CD4-positive, alpha-beta memory T cell (primary cell): ENCODE measurements at regions of chr14 and their contacts with region 1.

Region 1: GRCh38 chr14:55051426-55052268 is at the start of gene MAPK1IP1L:
- DNase-seq: peak; percentile 88 to 95 (median 91)
- H3K4me3 ChIP-seq: peak within 1 kb of the TSS; percentile 67 to 98
- H3K4me3 Mint-ChIP-seq: peak within 1 kb of the TSS; percentile 87 to 95 (median 92)
- H3K27ac ChIP-seq: peak within 1 kb of the TSS; percentile 100
- H3K27ac Mint-ChIP-seq: peak within 1 kb of the TSS; percentile 95 to 98 (median 96)
- H3K4me1 ChIP-seq: peaks cover 48% of the 10 kb centered on the region
- H3K4me1 Mint-ChIP-seq: peaks cover 27 to 55% (median 39%) of the 10 kb centered on the region in 4 donors
- H3K27me3 ChIP-seq: no peaks in the 10 kb centered on the region
- H3K27me3 Mint-ChIP-seq: no peaks in the 10 kb centered on the region
- total RNA-seq, gene MAPK1IP1L: 67.2 to 73.4 TPM

Region 2: GRCh38 chr14:54942913-54943312 is 108.7 kb before region 1 on chr14:
- CTCF ChIA-PET with region 1: no interaction called
- POLR2A ChIA-PET with region 1: no interaction called
- intact Hi-C with region 1: no loop called
- DNase-seq: no peak
- H3K4me3 ChIP-seq: no peak overlapping the region
- H3K4me3 Mint-ChIP-seq: no peak overlapping the region
- H3K27ac ChIP-seq: no peak overlapping the region
- H3K27ac Mint-ChIP-seq: no peak overlapping the region
- H3K4me1 ChIP-seq: peaks cover 20% of the 10 kb centered on the region
- H3K4me1 Mint-ChIP-seq: peaks cover 5 to 17% (median 6%) of the 10 kb centered on the region in 4 donors
- H3K27me3 ChIP-seq: no peaks in the 10 kb centered on the region
- H3K27me3 Mint-ChIP-seq: no peaks in the 10 kb centered on the region

Region 3: GRCh38 chr14:54955143-54955542 is 96.5 kb before region 1 on chr14:
- CTCF ChIA-PET with region 1: no interaction called
- POLR2A ChIA-PET with region 1: no interaction called
- intact Hi-C with region 1: no loop called
- DNase-seq: no peak
- H3K4me3 ChIP-seq: no peak overlapping the region
- H3K4me3 Mint-ChIP-seq: no peak overlapping the region
- H3K27ac ChIP-seq: no peak overlapping the region
- H3K27ac Mint-ChIP-seq: no peak overlapping the region
- H3K4me1 ChIP-seq: no peaks in the 10 kb centered on the region
- H3K4me1 Mint-ChIP-seq: peaks cover 0 to 1% (median 0%) of the 10 kb centered on the region in 4 donors
- H3K27me3 ChIP-seq: no peaks in the 10 kb centered on the region
- H3K27me3 Mint-ChIP-seq: no peaks in the 10 kb centered on the region

Region 4: DNA sequence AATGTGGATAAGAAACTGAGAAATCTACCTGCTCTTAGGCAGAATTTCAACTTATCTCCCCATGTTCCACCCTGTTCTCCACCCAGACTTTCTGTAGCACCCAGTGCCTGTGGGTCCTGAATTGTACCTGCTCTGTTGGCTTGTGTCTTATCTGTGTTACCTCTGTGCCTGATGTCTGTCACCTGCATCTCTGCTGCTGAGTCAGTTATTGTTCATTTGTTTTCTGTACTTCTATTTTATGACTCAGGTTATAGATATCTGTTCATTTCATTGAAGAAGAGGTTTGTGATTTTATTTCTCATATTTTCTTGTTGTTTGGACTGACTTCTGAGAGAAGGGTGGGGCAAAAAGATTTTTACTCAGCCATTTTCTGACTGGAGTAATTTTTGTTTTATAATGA is 12.9 kb before region 1 on chr14:
- CTCF ChIA-PET with region 1: interaction called, 26 read pairs
- POLR2A ChIA-PET with region 1: interaction called, 13 read pairs
- intact Hi-C with region 1: no loop called
- DNase-seq: no peak
- H3K4me3 ChIP-seq: no peak overlapping the region
- H3K4me3 Mint-ChIP-seq: no peak overlapping the region
- H3K27ac ChIP-seq: no peak overlapping the region
- H3K27ac Mint-ChIP-seq: peak overlapping the region in 2 of 7 donors; percentile 28 to 62
- H3K4me1 ChIP-seq: no peaks in the 10 kb centered on the region
- H3K4me1 Mint-ChIP-seq: peaks cover 0 to 4% (median under 1%) of the 10 kb centered on the region in 4 donors
- H3K27me3 ChIP-seq: no peaks in the 10 kb centered on the region
- H3K27me3 Mint-ChIP-seq: no peaks in the 10 kb centered on the region

Region 5: DNA sequence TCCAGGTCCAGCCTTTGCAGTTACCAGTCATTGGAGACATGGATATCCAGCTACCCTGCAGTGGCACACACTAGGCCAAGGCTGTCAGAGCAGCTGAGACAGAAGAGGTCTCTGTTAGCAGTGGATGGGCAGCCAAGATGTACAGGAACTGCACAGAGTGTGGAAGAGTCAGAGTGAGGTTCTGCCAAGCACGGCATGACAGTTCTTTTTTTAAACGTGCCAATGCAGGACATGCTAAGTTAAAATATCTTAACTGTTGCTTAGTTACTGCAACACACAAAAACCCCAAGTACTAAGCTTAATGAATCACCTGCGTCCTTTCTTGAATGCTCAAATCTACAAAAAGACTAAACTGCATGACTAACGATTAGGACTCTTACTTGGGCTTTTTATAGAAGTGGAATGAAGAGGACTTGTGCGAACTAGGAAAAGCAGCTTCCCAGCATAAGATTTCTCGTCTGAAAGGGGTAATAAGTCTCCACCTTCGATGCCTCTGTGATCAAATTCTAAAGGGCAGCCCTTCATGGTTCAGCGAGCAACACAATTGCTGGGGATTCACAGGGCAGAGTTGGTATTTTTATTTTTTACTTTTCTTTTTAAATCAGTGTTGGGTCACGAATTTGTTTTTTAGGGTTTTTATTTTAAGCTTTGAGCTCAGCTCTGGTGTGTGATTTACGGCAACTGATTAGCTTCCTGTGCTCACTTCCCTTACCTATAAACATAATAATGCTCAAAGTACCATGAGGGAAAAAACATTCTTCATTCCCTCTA is 20.4 kb after region 1 on chr14:
- CTCF ChIA-PET with region 1: interaction called, 14 read pairs
- POLR2A ChIA-PET with region 1: interaction called, 18 read pairs
- intact Hi-C with region 1: loop called (anchors 2 kb)
- DNase-seq: peak; percentile 24 to 52 (median 36)
- H3K4me3 ChIP-seq: peak overlapping the region in 1 of 2 donors; percentile 6
- H3K4me3 Mint-ChIP-seq: peak overlapping the region; percentile 24 to 85 (median 57)
- H3K27ac ChIP-seq: peak overlapping the region; percentile 29
- H3K27ac Mint-ChIP-seq: peak overlapping the region; percentile 72 to 93 (median 90)
- H3K4me1 ChIP-seq: peaks cover 37% of the 10 kb centered on the region
- H3K4me1 Mint-ChIP-seq: peaks cover 24 to 44% (median 38%) of the 10 kb centered on the region in 4 donors
- H3K27me3 ChIP-seq: no peaks in the 10 kb centered on the region
- H3K27me3 Mint-ChIP-seq: no peaks in the 10 kb centered on the region

Region 6: GRCh38 chr14:55094321-55095157 is 42.9 kb after region 1 on chr14:
- CTCF ChIA-PET with region 1: interaction called, 17 read pairs
- POLR2A ChIA-PET with region 1: interaction called, 6 read pairs
- intact Hi-C with region 1: loop called (anchors 1 kb)
- DNase-seq: no peak
- H3K4me3 ChIP-seq: no peak overlapping the region
- H3K4me3 Mint-ChIP-seq: no peak overlapping the region
- H3K27ac ChIP-seq: no peak overlapping the region
- H3K27ac Mint-ChIP-seq: no peak overlapping the region
- H3K4me1 ChIP-seq: peaks cover 21% of the 10 kb centered on the region
- H3K4me1 Mint-ChIP-seq: peaks cover 19 to 23% (median 20%) of the 10 kb centered on the region in 4 donors
- H3K27me3 ChIP-seq: no peaks in the 10 kb centered on the region
- H3K27me3 Mint-ChIP-seq: no peaks in the 10 kb centered on the region

Region 7: GRCh38 chr14:55160989-55161388 is 109.3 kb after region 1 on chr14:
- CTCF ChIA-PET with region 1: interaction called, 30 read pairs
- POLR2A ChIA-PET with region 1: interaction called, 11 read pairs
- intact Hi-C with region 1: loop called (anchors 1 kb)
- DNase-seq: peak in 4 of 5 donors; percentile 42 to 49 (median 46)
- H3K4me3 ChIP-seq: no peak overlapping the region
- H3K4me3 Mint-ChIP-seq: no peak overlapping the region
- H3K27ac ChIP-seq: no peak overlapping the region
- H3K27ac Mint-ChIP-seq: peak overlapping the region in 3 of 7 donors; percentile 14 to 80 (median 48)
- H3K4me1 ChIP-seq: peaks cover 21% of the 10 kb centered on the region
- H3K4me1 Mint-ChIP-seq: peaks cover 16 to 31% (median 18%) of the 10 kb centered on the region in 4 donors
- H3K27me3 ChIP-seq: no peaks in the 10 kb centered on the region
- H3K27me3 Mint-ChIP-seq: no peaks in the 10 kb centered on the region

Region 8: DNA sequence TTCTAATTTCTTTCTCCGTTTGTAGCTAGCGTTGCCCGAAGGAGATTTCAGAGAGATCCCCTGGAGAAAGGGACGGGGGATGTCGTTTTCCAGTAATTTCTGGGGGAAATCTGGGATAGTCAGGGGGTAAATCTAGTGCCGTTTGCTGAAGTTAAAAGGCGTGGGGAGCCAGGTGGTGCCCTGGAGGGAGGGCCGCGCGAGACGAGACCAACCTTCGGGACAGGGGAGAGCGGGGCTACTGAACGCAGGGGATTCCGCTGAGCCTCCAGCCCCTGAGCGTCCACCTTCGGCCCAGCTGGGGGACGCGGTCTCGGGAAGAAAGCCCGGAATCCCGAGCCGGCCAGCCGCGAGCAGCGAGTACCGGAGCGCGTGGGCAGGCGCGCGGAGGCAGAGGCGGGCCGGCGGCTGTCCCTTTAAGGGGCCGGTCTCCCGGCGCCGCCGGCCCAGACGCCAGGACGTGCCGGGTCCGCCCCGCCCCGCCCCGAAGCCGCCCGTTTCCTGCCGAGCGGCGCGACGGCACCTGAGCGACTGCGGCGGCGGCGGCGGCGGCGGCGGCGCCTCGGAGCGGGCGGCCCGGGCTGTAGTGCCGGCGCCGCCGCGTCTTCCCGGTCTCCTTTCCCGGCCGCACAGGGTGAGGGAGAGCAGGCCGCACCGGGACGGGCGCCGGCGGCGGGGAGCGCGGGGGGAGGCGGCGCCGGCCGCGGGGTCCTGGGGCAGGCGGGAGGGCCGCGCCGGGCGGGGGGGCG is 528.2 kb after region 1 on chr14 and contains the start of gene KTN1:
- CTCF ChIA-PET with region 1: no interaction called
- POLR2A ChIA-PET with region 1: no interaction called
- intact Hi-C with region 1: loop called (anchors 5 kb)
- DNase-seq: peak; percentile 84 to 90 (median 87)
- H3K4me3 ChIP-seq: peak within 1 kb of the TSS; percentile 49 to 87
- H3K4me3 Mint-ChIP-seq: peak within 1 kb of the TSS; percentile 93 to 96 (median 94)
- H3K27ac ChIP-seq: peak within 1 kb of the TSS; percentile 64
- H3K27ac Mint-ChIP-seq: peak within 1 kb of the TSS; percentile 94 to 97 (median 95)
- H3K4me1 ChIP-seq: peaks cover 49% of the 10 kb centered on the region
- H3K4me1 Mint-ChIP-seq: peaks cover 24 to 28% (median 27%) of the 10 kb centered on the region in 4 donors
- H3K27me3 ChIP-seq: no peaks in the 10 kb centered on the region
- H3K27me3 Mint-ChIP-seq: no peaks in the 10 kb centered on the region
- total RNA-seq, gene KTN1: 126 to 133 TPM